SK-N-SH (cell line): ENCODE measurements at regions of chr7 and their contacts with region 1.

Region 1: DNA sequence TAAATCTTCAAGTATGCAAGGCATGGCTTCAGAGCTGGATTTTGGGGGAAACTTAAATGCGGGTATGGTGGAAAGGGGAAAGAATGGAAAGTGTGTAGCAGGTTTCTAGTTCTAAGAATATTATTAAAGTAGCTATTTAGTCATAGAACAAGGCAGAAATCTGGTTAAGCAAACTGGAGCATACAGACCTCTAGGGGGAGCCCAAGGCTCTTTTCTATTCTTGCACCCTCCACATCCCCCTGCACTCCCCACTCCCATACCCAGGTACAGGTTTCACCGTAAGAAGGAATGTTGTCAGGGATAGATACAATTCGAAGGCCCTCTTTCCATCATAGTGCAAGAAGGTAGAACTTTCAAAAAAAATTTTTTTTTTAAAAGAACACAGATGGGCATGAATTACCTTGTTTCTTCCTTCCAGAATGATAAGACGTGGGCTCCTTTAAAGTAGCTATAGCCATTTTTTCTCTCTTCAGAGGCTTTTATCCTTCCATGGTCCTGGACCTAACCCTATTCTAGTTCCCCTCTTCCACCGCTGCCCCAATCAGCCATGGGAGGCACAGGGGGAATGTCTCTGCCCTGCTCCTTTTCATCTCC is 41.5 kb upstream of the SMIM30 start:
- DNase-seq: peak; percentile 63
- H3K4me3 ChIP-seq: no peak overlapping the region
- H3K27ac ChIP-seq: no peak overlapping the region
- H3K4me1 ChIP-seq: no peaks in the 10 kb centered on the region
- H3K27me3 ChIP-seq: no peaks in the 10 kb centered on the region
- CTCF ChIP-seq: peak; percentile 99
- EP300 ChIP-seq: no peak
- RAD21 ChIP-seq: peak; percentile 81

Region 2: DNA sequence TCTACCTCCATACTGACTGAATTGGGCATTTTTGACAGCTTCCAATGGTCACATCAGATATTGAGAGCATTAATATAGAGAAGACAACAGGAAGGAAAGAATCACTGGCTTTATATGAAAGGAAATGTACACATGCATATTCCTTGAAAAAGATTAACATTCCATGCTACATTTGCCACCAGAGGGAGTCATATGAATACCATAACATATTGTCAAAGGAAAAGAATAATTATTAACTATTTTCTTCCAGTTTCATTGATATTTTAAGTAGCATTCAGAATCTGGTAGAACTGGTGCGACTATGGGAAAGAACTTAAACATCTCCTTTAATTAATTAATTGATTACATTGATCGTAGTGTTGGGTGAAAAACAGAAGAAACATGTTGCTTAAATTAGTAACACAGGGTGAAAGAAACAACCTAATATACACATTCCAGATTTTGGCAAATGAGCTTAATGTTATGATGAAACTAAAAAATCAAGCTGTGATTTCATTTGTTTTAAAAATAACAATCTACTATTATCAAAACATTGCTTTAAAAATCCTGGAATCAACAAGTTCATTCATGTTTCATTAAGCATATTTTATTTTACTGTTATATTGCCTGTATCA is 144.7 kb before region 1 on chr7:
- CTCF ChIA-PET with region 1: interaction called, 37 read pairs
- POLR2A ChIA-PET with region 1: no interaction called
- DNase-seq: peak; percentile 55
- H3K4me3 ChIP-seq: no peak overlapping the region
- H3K27ac ChIP-seq: no peak overlapping the region
- H3K4me1 ChIP-seq: no peaks in the 10 kb centered on the region; a peak in 2 of 4 replicates
- H3K27me3 ChIP-seq: no peaks in the 10 kb centered on the region
- CTCF ChIP-seq: peak; percentile 90
- EP300 ChIP-seq: no peak
- RAD21 ChIP-seq: peak; percentile 84

Region 3: DNA sequence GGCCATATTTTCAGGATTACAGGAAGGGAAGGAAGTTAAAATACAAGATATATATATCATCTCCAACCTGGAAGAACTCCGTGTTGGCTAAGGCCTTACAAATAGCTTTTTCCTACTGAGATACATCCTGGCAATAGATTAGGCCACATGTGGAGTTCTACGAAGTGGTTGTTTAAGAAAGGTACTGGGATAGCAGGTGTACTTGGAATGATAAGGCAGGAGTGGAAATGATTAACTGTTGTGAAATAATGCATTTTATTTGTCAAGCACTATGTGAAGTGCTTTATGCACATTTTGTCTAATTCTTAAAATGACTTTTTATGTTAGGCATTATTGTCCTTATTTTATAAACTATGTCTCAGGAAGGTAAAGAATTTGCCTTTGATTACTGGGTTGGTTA is 22.6 kb before region 1 on chr7:
- CTCF ChIA-PET with region 1: interaction called, 10 read pairs
- POLR2A ChIA-PET with region 1: no interaction called
- DNase-seq: no peak
- H3K4me3 ChIP-seq: no peak overlapping the region
- H3K27ac ChIP-seq: no peak overlapping the region
- H3K4me1 ChIP-seq: no peaks in the 10 kb centered on the region
- H3K27me3 ChIP-seq: no peaks in the 10 kb centered on the region
- CTCF ChIP-seq: no peak
- EP300 ChIP-seq: no peak
- RAD21 ChIP-seq: no peak

Region 4: DNA sequence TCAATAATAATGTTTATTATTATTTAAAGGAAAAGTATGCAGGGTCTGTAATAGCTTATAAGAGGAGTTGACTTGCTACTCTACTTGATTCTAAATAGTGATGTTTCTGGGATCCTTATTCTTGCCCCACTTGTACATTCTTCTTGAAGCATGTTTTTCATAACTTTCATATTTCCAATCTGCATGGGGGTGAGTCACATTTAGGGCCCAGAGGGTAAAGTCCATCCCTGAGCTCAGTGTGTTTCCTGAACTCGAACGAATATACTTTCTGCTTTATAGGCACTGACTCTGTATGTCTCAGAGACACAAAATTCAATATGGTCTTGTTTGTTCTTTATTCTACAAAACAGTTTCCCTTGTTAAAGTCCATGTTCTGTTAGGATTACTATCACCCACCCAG is 19.5 kb after region 1 on chr7:
- CTCF ChIA-PET with region 1: interaction called, 42 read pairs
- POLR2A ChIA-PET with region 1: no interaction called
- DNase-seq: no peak
- H3K4me3 ChIP-seq: no peak overlapping the region
- H3K27ac ChIP-seq: no peak overlapping the region
- H3K4me1 ChIP-seq: no peaks in the 10 kb centered on the region
- H3K27me3 ChIP-seq: no peaks in the 10 kb centered on the region
- CTCF ChIP-seq: no peak
- EP300 ChIP-seq: no peak
- RAD21 ChIP-seq: no peak

Region 5: GRCh38 chr7:113421696-113422330 is 262.0 kb after region 1 on chr7:
- CTCF ChIA-PET with region 1: interaction called, 85 read pairs
- POLR2A ChIA-PET with region 1: interaction called, 3 read pairs
- DNase-seq: peak; percentile 64
- H3K4me3 ChIP-seq: no peak overlapping the region; a peak in 1 of 4 replicates
- H3K27ac ChIP-seq: no peak overlapping the region
- H3K4me1 ChIP-seq: peaks cover 0 to 2% of the 10 kb centered on the region in 2 experiments; a peak in 1 of 4 replicates
- H3K27me3 ChIP-seq: no peaks in the 10 kb centered on the region
- CTCF ChIP-seq: peak; percentile 97
- EP300 ChIP-seq: no peak
- RAD21 ChIP-seq: peak; percentile 98